ENCODE measurements at regions of chr17 and their contacts with region 1.

Region 1: DNA sequence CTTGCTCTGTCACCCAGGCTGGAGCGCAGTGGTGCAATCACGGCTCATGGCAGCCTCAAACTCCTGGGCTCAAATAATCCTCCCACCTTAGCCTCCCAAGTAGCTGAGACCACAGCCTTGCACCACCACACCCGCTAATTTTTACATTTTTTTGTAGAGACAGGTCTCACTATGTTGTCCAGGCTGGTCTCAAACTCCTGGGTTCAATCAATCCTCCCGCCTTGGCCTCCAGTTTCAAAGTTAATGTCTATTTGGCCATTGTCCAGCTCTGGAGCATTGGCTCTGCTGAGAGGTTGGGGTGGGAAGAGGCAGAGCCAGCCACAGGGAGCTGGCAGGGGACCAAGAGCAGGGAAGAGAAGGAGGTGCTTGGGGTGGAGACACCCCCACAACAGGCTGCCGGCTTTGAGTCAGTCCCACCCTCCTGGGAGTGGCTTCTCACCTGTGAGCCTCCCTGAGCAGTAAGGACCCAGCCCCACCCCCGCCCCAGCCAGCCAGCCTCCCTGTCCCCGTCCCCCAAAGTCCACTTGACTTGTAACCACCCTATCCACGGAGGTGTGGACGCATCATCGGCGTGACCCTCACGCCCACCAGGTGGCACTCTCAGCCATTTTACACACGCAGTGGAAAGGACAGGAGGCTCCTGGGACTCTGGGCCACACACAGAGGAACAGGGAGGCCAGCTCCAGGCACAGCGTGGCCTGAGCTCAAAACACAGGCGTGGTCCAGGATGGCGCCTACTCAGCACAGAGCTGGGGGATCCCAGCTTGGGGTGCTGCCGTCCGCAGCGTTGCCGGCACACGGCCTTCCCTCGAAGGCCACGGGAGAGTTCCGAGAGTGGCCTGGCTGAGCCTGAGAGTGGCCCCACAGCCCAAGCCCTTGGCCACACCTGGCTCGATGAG is 22.8 kb upstream of the PVALEF start:
- DNase-seq: peak; percentile 81
- H3K4me3 ChIP-seq: no peak overlapping the region
- H3K27ac ChIP-seq: no peak overlapping the region
- H3K4me1 ChIP-seq: no peaks in the 10 kb centered on the region
- CTCF ChIP-seq: peak; percentile 83

Region 2: DNA sequence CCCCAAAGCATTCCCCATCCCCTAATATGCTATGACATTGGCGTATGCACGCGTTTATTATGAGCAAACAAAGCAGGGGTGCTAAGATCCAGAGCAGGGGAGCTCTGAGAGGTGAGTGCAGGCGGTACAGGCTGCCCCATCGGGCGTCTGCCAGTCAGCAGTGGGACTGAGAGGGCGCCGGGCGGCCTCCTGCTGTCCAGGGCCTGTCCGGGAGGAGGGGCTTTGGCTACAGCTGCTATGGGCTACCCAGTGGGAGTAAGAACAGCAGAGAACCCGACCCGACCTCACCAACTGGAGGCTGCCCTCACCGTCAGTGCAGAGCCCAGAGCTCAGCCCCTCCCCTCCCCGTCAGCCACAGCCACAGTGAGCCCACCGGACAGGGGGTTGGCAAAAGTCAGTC is 42.0 kb after region 1 on chr17:
- CTCF ChIA-PET with region 1: no interaction called
- POLR2A ChIA-PET with region 1: no interaction called
- intact Hi-C with region 1: no loop called
- DNase-seq: no peak
- H3K4me3 ChIP-seq: no peak overlapping the region
- H3K27ac ChIP-seq: no peak overlapping the region
- H3K4me1 ChIP-seq: no peaks in the 10 kb centered on the region
- CTCF ChIP-seq: no peak

Region 3: GRCh38 chr17:81200695-81201580 is 58.4 kb after region 1 on chr17:
- CTCF ChIA-PET with region 1: no interaction called
- POLR2A ChIA-PET with region 1: interaction called, 3 read pairs
- intact Hi-C with region 1: loop called (anchors 1 kb)
- DNase-seq: peak; percentile 75
- H3K4me3 ChIP-seq: no peak overlapping the region
- H3K27ac ChIP-seq: no peak overlapping the region
- H3K4me1 ChIP-seq: peaks cover 7% of the 10 kb centered on the region
- CTCF ChIP-seq: peak; percentile 80

Region 4: GRCh38 chr17:81230043-81230820 is 87.7 kb after region 1 on chr17:
- CTCF ChIA-PET with region 1: no interaction called
- POLR2A ChIA-PET with region 1: no interaction called
- intact Hi-C with region 1: loop called (anchors 1 kb)
- DNase-seq: peak; percentile 52
- H3K4me3 ChIP-seq: no peak overlapping the region
- H3K27ac ChIP-seq: no peak overlapping the region
- H3K4me1 ChIP-seq: peaks cover 17% of the 10 kb centered on the region
- CTCF ChIP-seq: peak; percentile 79

Region 5: GRCh38 chr17:81494626-81495385 is 352.3 kb after region 1 on chr17:
- CTCF ChIA-PET with region 1: no interaction called
- POLR2A ChIA-PET with region 1: no interaction called
- intact Hi-C with region 1: no loop called
- DNase-seq: peak; percentile 65
- H3K4me3 ChIP-seq: peak overlapping the region; percentile 17
- H3K27ac ChIP-seq: no peak overlapping the region
- H3K4me1 ChIP-seq: peaks cover 14% of the 10 kb centered on the region
- CTCF ChIP-seq: no peak